Lower lobe of right lung (tissue), 2 donors: ENCODE measurements at regions of chr17 and their contacts with region 1.

Region 1: GRCh38 chr17:60468371-60468770 is 46.1 kb downstream of the CHCT1 start:
- DNase-seq: no peak
- ATAC-seq: no peak
- H3K4me3 ChIP-seq: no peak overlapping the region
- H3K27ac ChIP-seq: no peak overlapping the region
- H3K4me1 ChIP-seq: peaks cover 23% of the 10 kb centered on the region
- H3K27me3 ChIP-seq: no peaks in the 10 kb centered on the region
- CTCF ChIP-seq: no peak

Region 2: DNA sequence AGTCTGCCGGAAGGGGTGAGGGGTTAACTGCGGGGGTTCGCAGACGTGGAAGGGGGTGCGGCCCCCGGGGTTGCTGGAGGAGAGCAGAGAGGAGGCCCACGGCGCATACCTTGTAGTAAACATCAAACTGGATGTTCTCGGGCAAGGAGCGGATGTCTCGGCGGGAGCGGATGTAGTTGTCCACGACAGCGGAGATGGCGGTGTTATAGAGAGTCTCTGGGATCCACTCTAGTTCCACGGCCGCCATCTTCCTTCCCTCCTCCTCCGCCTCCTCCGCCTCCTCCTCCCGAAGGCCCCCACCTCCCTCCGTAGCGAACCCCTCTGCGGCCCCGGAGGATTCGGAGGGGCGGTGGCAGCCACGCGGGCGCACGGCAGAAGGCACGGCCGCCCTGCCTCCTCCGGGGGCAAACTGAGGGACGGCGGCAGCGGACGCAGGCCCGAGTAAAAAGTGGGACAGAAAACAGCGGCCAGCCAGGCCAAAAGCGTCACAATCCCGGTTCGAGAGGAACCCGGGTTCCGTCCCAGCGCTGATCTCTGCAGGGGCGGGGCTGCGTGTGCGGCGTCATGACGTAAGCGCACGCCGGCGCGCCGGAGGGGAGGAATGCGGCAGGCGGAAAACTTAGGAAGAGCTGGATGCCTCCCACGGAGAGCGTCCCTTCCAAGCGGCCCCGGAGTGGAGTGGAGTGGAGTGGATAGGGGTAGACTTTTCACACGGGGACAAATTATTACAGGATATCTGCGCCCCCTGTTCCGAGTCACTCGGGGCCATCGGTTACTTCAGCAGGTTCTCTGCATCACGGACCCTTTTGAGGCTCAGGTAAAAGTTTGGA is 57.5 kb after region 1 on chr17 and contains the start of gene APPBP2:
- intact Hi-C with region 1: loop called (anchors 10 kb)
- DNase-seq: peak; percentile 90
- ATAC-seq: peak; percentile 98
- H3K4me3 ChIP-seq: peak within 1 kb of the TSS; percentile 93
- H3K27ac ChIP-seq: peak within 1 kb of the TSS; percentile 99
- H3K4me1 ChIP-seq: peaks cover 44% of the 10 kb centered on the region
- H3K27me3 ChIP-seq: no peaks in the 10 kb centered on the region
- CTCF ChIP-seq: no peak
- total RNA-seq, gene APPBP2: 49.4 TPM

Region 3: GRCh38 chr17:60557805-60558204 is 89.4 kb after region 1 on chr17:
- intact Hi-C with region 1: no loop called
- DNase-seq: no peak
- ATAC-seq: no peak
- H3K4me3 ChIP-seq: no peak overlapping the region
- H3K27ac ChIP-seq: no peak overlapping the region
- H3K4me1 ChIP-seq: no peaks in the 10 kb centered on the region
- H3K27me3 ChIP-seq: no peaks in the 10 kb centered on the region
- CTCF ChIP-seq: no peak